Sciatic nerve (tissue), 2 donors: ENCODE measurements at regions of chr5 and their contacts with region 1.

Region 1: DNA sequence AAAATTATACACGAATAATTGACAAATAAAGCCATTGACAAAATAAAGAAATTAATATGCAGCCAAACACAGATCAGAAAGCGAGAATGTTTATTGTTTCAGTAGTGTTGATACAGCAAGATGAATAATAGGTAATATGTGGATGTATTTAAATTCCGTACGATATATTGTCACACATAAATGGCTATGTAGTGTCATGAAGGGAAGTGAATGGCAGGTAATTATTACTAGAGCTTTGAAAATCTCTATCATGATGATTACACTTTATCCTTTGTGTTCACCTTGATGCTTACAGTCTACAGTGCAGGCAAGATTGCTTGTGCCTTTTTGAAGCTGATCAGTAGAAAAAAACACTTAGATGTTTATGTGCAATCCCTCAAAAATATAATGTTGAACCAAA is 23.3 kb upstream of the CDH10 start:
- DNase-seq: no peak
- ATAC-seq: no peak

Region 2: DNA sequence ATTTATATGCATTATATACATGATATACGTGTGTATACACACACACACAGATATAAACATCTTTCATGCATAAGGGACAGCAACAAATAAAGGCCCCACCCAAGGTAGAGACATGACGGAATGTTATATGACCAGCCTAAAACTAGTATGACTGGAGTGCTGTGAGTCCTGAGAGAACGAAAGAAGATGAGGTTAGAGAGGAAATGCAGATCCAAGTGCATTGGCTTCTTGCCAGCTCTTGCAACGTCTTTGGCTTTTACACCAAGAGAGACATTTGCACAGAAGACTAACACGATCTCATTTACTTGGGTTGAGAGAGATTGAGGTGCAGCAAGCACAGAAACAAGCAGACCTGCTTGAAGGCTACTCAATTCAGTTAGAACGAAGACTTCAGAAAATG is 46.3 kb before region 1 on chr5:
- intact Hi-C with region 1: loop called (anchors 2 kb)
- DNase-seq: no peak
- ATAC-seq: no peak

Region 3: DNA sequence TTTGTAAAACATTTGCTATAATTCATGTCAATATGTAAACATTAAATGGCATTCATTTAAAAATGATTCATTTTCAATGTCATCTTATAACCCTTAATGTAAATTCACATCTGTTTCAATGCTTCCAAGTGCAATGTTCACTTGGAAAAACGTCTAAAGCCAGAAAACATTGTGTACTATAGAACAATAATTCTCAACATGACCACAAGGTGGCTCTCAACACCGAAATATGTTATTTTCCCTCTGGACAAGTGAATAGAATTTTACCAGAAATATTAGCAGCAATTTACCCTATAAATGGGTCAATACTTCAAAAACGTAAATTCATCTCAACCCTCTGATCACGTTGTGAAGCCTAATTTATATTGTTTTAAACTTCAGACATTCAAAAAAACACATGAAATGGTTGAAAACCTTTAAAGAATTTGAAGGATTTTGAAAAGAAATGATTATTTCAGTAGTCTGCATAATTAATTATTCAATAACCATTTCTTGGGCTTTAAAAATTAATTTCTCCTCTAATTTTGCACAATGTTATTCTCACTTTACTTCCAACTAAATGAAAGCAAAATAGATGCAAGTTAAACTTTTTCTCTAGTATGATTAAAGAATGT is 34.2 kb before region 1 on chr5:
- intact Hi-C with region 1: no loop called
- DNase-seq: no peak
- ATAC-seq: no peak